Right cardiac atrium (tissue), 5 donors: ENCODE measurements at regions of chr15 and their contacts with region 1.

Region 1: GRCh38 chr15:94163999-94164807 is 67.2 kb upstream of the MCTP2 start:
- DNase-seq: peak in 1 of 3 donors; percentile 24
- ATAC-seq: peak in 1 of 2 donors; percentile 51
- H3K4me3 ChIP-seq: no peak overlapping the region
- H3K27ac ChIP-seq: no peak overlapping the region
- H3K4me1 ChIP-seq: no peaks in the 10 kb centered on the region
- H3K27me3 ChIP-seq: no peaks in the 10 kb centered on the region

Region 2: DNA sequence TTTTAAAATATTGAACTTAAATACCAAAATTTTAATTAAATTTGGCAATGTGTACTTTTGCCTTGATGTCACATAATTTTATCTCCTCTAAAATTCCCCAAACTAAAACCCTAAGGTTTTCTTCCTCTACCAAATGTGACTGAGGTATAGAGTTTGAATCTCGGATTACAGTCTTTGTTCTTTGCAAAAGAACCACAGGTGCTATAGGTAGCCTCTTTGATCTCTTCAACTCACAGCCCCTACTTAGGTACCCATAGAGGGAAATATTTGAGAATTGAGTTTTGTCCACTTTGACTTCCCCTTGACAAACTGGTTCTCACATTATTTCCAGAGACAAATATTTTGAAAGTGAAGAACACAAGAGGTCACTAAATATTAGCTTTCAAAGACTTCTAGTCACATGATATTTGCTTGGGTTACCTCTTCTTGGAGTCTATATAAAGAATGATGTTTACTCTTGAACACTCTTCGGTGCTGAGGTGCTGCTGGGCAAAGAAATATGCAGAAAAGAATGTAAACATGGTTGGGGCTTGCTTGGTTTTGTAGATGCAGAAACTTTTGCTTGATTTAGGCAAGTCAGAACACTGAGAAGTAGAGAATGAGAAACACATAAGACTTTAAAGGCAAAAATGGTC is 53.6 kb before region 1 on chr15:
- intact Hi-C with region 1: no loop called
- DNase-seq: no peak
- ATAC-seq: no peak
- H3K4me3 ChIP-seq: no peak overlapping the region
- H3K27ac ChIP-seq: no peak overlapping the region
- H3K4me1 ChIP-seq: no peaks in the 10 kb centered on the region
- H3K27me3 ChIP-seq: no peaks in the 10 kb centered on the region

Region 3: DNA sequence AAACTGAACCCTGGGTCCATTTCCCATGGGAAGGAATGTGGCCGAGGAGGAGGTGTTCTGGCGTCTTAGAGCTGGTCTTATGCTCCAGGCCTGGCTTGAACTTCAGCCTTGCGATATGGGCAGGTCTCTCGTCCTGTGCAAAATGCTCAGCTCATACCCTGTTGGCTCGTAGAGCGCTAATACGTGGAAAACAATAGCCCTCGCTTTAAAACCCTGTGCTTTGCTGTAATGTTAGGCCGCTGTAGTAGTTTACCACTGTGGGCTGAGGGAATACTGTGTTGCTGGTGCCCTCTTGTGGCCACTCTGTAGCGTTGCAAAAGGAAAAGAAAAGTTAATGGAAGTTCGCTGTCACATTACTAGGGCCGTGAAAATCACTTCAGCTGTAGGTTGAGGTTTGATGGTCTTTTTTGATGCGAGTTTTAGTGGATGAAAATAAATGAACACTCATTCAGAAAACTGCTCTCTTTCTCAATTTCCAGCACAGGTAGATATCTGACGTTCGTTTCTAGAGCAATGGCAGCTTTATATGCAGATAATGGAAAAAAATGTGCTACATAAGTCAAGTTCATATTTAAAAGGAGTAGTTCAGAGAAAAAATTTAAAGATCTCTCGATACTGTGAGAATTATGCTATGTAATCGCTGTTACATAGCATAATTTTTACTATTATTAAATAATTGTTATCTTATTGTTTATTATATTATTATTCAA is 160.1 kb after region 1 on chr15:
- intact Hi-C with region 1: loop called in 3 of 4 experiments (anchors 2 to 5 kb)
- DNase-seq: peak in 2 of 3 donors; percentile 18 to 37
- ATAC-seq: peak; percentile 84 to 90
- H3K4me3 ChIP-seq: no peak overlapping the region
- H3K27ac ChIP-seq: no peak overlapping the region
- H3K4me1 ChIP-seq: no peaks in the 10 kb centered on the region
- H3K27me3 ChIP-seq: no peaks in the 10 kb centered on the region